Naive thymus-derived CD8-positive, alpha-beta T cell (primary cell): ENCODE measurements at regions of chr10 and their contacts with region 1.

Region 1: DNA sequence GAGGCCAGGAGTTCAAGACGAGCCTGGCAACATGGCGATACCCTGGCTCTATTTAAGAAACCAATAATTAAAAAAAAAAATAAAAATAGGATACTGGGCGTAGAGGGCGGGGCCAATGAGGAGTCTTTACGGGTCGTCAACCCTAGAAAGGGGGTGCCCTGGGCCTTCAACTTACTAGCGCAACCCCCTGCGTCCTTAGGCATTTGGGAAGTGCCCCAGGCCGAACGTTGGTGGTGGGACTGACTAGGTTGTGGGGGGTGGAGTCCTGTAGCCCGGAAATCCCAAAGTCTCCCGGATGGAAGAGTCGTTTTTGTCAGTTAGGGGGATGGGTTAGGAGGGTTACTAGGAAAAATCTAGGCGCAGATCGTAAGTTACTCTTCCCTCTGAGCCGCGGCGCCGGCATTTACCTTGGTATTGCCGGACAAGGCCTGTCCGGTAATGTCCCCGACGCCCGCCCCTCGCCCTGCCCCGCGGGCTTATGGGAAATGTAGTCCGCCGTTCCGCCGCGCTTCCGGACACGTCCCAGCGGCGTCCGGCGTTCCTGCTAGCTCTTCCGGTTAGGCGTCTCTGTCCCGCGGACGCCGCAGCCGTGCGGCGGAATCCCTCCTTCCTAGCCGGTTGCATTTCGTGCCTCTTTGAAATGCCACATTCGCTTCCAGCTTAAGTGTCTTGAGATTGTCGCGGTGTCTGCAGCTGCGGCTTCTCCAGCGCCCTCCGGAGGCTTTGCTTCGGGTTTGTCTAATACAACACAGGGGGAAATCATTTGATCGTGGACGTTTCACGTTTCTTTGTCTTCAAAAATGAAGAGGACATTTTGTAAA is 1.3 kb upstream of the ACBD5 start:
- DNase-seq: peak; percentile 75 to 91 (median 84)
- ATAC-seq: peak; percentile 57 to 64
- H3K4me3 Mint-ChIP-seq: peak overlapping the region; percentile 81 to 99 (median 98)
- H3K27ac Mint-ChIP-seq: peak overlapping the region; percentile 95 to 100 (median 99)
- H3K4me1 Mint-ChIP-seq: peaks cover 19 to 48% (median 34%) of the 10 kb centered on the region in 4 donors
- H3K27me3 Mint-ChIP-seq: no peaks in the 10 kb centered on the region

Region 2: GRCh38 chr10:27030060-27030459 is 211.8 kb before region 1 on chr10:
- POLR2A ChIA-PET with region 1: no interaction called
- DNase-seq: no peak
- ATAC-seq: no peak
- H3K4me3 Mint-ChIP-seq: no peak overlapping the region
- H3K27ac Mint-ChIP-seq: no peak overlapping the region
- H3K4me1 Mint-ChIP-seq: peaks cover under 1 to 7% (median 4%) of the 10 kb centered on the region in 4 donors
- H3K27me3 Mint-ChIP-seq: no peaks in the 10 kb centered on the region

Region 3: DNA sequence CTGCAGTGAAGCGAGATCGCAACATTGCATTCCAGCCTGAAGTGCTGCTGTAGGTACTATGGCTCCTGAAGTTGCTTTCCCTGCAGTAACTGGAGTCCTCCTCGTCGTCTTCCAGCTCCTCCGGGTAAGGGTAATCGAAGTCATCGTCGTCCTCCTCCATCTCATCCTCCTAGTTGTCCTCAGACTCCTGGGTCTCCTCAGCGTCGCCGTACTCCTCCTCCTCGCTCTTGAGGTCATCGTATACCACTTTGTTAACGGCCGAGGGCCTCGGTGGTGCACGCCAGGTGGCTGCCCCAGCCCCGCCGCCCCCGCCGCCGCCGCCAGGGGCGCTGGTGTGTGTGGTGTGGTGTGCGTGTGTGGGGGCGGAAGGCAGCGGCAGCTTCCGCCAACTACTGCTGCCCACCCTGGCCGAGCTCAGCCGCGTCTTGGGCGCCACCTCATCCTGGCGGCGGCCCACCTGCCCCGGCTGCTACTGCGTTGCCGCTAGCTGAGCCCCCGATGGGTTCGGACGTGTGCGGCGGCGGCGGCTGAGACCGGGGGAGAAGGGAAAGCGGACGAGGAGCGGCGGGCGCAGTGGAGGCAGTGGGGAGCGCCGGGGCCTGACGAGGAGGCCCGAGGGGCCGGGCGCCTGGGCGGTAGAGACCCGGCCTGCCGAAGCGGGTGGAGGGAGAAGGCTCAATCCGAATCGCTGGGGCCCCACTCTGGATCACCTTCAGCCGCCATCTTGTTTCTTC is 10.6 kb after region 1 on chr10:
- POLR2A ChIA-PET with region 1: interaction called, 66 read pairs
- DNase-seq: peak; percentile 61 to 87 (median 76)
- ATAC-seq: peak; percentile 91
- H3K4me3 Mint-ChIP-seq: peak overlapping the region; percentile 71 to 86 (median 78)
- H3K27ac Mint-ChIP-seq: peak overlapping the region in 9 of 10 donors; percentile 59 to 94 (median 86)
- H3K4me1 Mint-ChIP-seq: peaks cover 0 to 13% (median 10%) of the 10 kb centered on the region in 4 donors
- H3K27me3 Mint-ChIP-seq: peaks cover 0 to 5% (median 0%) of the 10 kb centered on the region in 5 donors

Region 4: GRCh38 chr10:27258492-27258837 is 16.6 kb after region 1 on chr10:
- POLR2A ChIA-PET with region 1: interaction called, 66 read pairs
- DNase-seq: peak in 3 of 10 donors; percentile 8 to 20 (median 19)
- ATAC-seq: peak in 1 of 2 donors; percentile 11
- H3K4me3 Mint-ChIP-seq: peak overlapping the region; percentile 76 to 95 (median 90)
- H3K27ac Mint-ChIP-seq: peak overlapping the region in 7 of 10 donors; percentile 7 to 95 (median 28)
- H3K4me1 Mint-ChIP-seq: peaks cover 15 to 29% (median 21%) of the 10 kb centered on the region in 4 donors
- H3K27me3 Mint-ChIP-seq: peaks cover 19 to 43% (median 27%) of the 10 kb centered on the region in 5 donors

Region 5: GRCh38 chr10:27504007-27504807 is 262.3 kb after region 1 on chr10 and contains the start of gene RAB18:
- POLR2A ChIA-PET with region 1: interaction called, 21 read pairs
- DNase-seq: peak; percentile 94 to 100 (median 98)
- ATAC-seq: peak; percentile 94
- H3K4me3 Mint-ChIP-seq: peak within 1 kb of the TSS; percentile 96 to 100 (median 99)
- H3K27ac Mint-ChIP-seq: peak within 1 kb of the TSS; percentile 96 to 100 (median 99)
- H3K4me1 Mint-ChIP-seq: peaks cover 23 to 53% (median 51%) of the 10 kb centered on the region in 4 donors
- H3K27me3 Mint-ChIP-seq: peaks cover 0 to 3% (median 0%) of the 10 kb centered on the region in 5 donors
- polyA plus RNA-seq, gene RAB18: 65.4 to 82.4 (median 76.3) TPM